Activated T-helper 2 cell treated with anti-CD3 and anti-CD28 coated beads, Interferon-gamma antibody, Interleukin-2, Interleukin-4, amounts not matched to agents 10 μg/mL and 5 μg/mL and 100 μg/mL, durations not matched to agents 14 hours and 24 hours and 36 hours (primary cell): ENCODE measurements at regions of chr12 and their contacts with region 1.

Region 1: DNA sequence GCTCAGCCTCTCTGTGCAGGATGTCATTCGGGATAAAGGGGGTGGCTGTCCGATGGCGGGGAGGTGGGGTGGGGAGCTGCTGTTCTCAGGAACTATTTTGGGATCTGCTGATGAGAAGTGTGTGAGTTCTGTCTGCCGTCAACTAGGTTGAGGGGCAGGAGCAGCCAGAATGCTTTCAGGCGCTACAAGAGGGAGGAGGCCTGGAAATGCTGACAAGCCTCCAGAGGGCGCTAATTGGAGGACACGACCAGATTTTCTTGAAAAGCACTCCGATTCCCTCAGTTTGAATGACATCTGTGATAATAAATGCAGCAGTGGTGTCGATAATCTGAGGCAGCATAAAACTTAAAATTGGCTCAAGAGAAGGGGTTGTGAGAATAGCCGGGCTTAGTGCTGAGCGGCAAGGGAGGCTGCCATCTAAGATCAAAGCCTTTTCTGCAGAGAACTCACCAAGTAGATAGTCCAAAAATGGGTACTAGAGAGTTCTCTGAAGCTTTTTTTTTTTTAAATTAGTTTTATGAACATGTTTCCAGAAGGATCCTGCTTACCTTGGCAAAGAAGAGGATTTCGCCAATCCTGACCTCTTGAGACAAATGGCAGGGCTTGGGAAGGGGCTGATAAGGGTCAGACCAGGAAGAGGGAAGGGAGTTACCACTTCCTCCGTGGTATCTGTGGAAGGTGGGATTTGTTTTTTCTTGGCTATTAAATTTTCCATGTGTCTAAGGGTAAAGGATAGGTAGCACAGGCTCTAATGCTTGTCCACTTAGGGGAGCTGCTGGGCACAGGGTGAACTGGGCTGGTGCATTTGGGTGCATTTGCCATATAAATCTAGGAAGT is 94.4 kb downstream of the CRACR2A start:
- DNase-seq: peak; percentile 18
- H3K4me3 Mint-ChIP-seq: no peak overlapping the region
- H3K27ac Mint-ChIP-seq: no peak overlapping the region
- H3K4me1 Mint-ChIP-seq: no peaks in the 10 kb centered on the region
- H3K27me3 Mint-ChIP-seq: no peaks in the 10 kb centered on the region

Region 2: GRCh38 chr12:3777206-3777809 is 118.8 kb after region 1 on chr12:
- intact Hi-C with region 1: loop called (anchors 1 kb)
- DNase-seq: no peak
- H3K4me3 Mint-ChIP-seq: no peak overlapping the region
- H3K27ac Mint-ChIP-seq: no peak overlapping the region
- H3K4me1 Mint-ChIP-seq: peaks cover 4% of the 10 kb centered on the region
- H3K27me3 Mint-ChIP-seq: peaks cover 10% of the 10 kb centered on the region

Region 3: DNA sequence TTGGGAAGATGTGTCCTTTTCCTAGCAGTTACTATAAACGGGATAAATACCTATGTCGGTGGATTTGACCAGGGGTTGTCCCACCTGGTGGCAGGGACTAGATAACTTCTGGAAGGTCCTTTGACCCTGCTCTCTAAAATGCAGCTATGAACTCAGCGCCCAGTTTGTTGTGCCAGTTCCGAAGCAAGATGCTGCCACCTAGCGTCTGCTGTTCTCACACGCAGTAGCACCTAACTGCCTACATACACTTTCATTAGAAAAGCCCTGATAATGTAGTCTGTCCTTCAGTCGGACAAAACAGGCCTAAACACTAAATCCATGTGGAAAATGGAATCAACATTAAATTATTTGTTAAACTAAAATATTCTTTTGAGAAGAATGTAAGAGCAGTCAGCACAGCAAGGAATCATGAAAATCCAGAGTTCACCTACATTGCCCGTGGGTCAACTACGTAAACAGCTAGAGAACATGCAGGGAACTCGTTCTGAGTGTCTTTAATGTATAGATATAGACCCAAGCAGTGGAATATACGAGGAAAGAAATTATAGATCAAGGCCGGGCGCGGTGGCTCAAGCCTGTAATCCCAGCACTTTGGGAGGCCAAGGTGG is 145.4 kb after region 1 on chr12:
- intact Hi-C with region 1: loop called (anchors 5 kb)
- DNase-seq: peak; percentile 51
- H3K4me3 Mint-ChIP-seq: no peak overlapping the region
- H3K27ac Mint-ChIP-seq: no peak overlapping the region
- H3K4me1 Mint-ChIP-seq: peaks cover 6% of the 10 kb centered on the region
- H3K27me3 Mint-ChIP-seq: no peaks in the 10 kb centered on the region